ENCODE measurements at regions of chr4 and their contacts with region 1.

Region 1: GRCh38 chr4:41692717-41693345 is 55.7 kb downstream of the PHOX2B start:
- DNase-seq: peak; percentile 14 to 94 (median 60)

Region 2: DNA sequence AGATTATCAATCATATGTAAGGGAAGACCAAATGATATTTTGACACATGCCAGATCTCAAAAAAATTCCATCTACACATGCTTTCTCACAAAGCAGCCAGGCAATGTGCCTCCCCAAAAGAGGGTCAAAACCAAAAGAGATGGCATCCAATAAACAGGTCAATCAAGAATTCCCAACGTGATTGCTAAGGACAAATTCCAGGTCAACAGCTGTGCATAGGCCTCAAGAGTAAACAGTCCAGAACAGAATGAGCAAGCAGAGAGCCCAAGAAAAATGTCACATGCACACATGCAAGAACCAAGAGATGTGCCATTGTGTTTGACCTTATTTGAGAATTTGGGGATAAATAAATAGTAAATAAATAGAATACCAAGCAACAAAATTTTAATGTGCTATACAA is 615.2 kb before region 1 on chr4:
- intact Hi-C with region 1: no loop called
- DNase-seq: no peak

Region 3: DNA sequence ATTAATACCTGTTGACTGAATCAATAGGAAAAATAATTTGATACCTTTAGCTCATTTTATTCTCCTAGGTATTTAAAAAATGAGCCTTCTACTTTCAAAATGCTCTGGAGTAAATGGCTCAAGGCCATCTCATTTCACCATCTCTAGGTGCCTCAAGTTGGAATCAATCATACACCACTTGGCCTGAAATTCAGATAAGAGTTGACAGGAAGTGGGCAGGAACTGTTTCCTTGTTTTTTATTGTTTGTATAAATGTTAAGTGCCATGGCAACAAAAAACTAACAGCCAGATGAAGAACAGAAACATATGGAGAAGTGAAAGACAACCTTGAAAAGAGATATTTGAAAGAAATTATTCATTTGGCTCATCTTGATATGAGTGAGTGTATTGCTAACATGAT is 142.5 kb before region 1 on chr4:
- intact Hi-C with region 1: no loop called
- DNase-seq: no peak

Region 4: GRCh38 chr4:41882625-41883347 is 190.0 kb after region 1 on chr4:
- intact Hi-C with region 1: loop called (anchors 2 kb)
- DNase-seq: peak in 4 of 10 donors; percentile 9 to 89 (median 55)

Region 5: DNA sequence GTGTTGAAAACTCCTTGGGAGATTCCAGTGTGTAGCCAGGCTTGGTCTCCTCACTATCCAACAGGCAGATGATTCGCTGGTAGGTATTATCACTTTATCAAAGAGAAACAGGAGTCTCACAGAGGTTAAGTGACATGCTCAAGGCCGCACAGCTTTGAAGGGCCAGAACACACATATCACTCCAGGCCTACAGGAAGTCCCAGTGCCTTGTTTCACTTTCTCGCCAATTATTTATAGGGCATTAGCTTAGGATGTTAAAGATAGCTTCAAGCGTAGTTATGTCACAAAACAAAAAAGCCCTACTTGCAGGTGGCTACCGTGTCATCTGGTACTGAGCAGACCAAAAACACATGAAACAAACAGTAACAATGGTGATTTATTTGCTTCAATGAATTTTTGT is 950.9 kb after region 1 on chr4:
- intact Hi-C with region 1: no loop called
- DNase-seq: no peak

Measured in posterior cingulate gyrus (tissue), 11 donors.